CD14-positive monocyte (primary cell): ENCODE measurements at regions of chr13 and their contacts with region 1.

Region 1: GRCh38 chr13:80444240-80445015 is 103.5 kb upstream of the SPRY2 start:
- DNase-seq: peak; percentile 85 to 89 (median 87)
- H3K4me3 ChIP-seq: peak overlapping the region in 1 of 3 experiments; percentile 29
- H3K4me3 Mint-ChIP-seq: peak overlapping the region in 1 of 2 donors; percentile 83
- H3K27ac ChIP-seq: peak overlapping the region in 1 of 2 donors; percentile 39
- H3K27ac Mint-ChIP-seq: peak overlapping the region; percentile 51 to 92 (median 87)
- H3K4me1 ChIP-seq: peaks cover 26 to 39% of the 10 kb centered on the region in 2 donors
- H3K4me1 Mint-ChIP-seq: peaks cover 47% of the 10 kb centered on the region
- H3K27me3 ChIP-seq: peaks cover 0 to 3% of the 10 kb centered on the region in 2 donors
- H3K27me3 Mint-ChIP-seq: peaks cover 4 to 19% (median 10%) of the 10 kb centered on the region in 3 donors
- CTCF ChIP-seq: no peak

Region 2: GRCh38 chr13:80048802-80049201 is 395.6 kb before region 1 on chr13:
- intact Hi-C with region 1: loop called in 1 of 2 experiments (anchors 10 kb)
- DNase-seq: peak; percentile 94 to 98 (median 95)
- H3K4me3 ChIP-seq: peak overlapping the region in 1 of 3 experiments; percentile 19
- H3K4me3 Mint-ChIP-seq: peak overlapping the region in 1 of 2 donors; percentile 48
- H3K27ac ChIP-seq: peak overlapping the region in 1 of 2 donors; percentile 42
- H3K27ac Mint-ChIP-seq: peak overlapping the region; percentile 75 to 90 (median 82)
- H3K4me1 ChIP-seq: peaks cover 14 to 27% of the 10 kb centered on the region in 2 donors
- H3K4me1 Mint-ChIP-seq: peaks cover 31% of the 10 kb centered on the region
- H3K27me3 ChIP-seq: no peaks in the 10 kb centered on the region
- H3K27me3 Mint-ChIP-seq: peaks cover 0 to 2% (median 0%) of the 10 kb centered on the region in 3 donors
- CTCF ChIP-seq: no peak